Mammary epithelial cell (primary cell): ENCODE measurements at regions of chr6 and their contacts with region 1.

Region 1: DNA sequence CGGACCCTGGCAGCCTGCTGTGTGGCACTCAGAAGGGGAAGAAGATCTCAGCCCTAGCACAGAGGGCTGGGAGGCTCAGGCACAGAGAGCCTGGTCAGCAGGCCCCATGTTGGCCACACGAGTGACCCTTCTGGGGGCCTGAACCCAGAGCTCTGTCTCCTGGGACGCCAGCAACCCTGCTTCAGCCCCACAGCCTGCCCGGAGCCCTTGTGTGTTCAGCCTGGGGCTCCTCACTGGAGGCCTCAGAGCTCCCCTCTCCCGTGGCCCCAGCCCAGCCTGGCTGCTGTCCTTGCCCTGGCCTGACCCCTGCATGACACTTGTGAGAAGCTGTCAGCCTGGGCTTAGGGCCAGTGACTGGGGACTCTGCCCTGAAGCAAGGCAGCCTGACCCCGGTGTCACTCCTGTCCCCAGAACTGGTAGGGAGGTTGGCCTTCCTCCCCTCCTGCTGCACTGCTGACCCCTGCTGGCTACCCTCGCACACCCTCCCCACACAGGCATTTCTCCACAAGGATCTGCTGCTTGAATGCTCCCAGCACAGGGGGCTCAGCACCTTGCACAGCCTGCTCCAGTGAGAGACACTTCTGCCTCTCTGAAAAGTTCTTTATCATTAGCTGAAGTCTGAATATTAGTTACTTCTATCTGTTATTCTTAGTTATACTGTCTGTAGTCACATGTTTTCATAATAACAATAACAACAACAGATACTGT is 15.4 kb upstream of the IP6K3 start:
- DNase-seq: peak; percentile 30
- H3K4me3 ChIP-seq: no peak overlapping the region
- H3K27ac ChIP-seq: no peak overlapping the region
- H3K4me1 ChIP-seq: no peaks in the 10 kb centered on the region
- H3K27me3 ChIP-seq: no peaks in the 10 kb centered on the region
- CTCF ChIP-seq: peak; percentile 68 to 91

Region 2: DNA sequence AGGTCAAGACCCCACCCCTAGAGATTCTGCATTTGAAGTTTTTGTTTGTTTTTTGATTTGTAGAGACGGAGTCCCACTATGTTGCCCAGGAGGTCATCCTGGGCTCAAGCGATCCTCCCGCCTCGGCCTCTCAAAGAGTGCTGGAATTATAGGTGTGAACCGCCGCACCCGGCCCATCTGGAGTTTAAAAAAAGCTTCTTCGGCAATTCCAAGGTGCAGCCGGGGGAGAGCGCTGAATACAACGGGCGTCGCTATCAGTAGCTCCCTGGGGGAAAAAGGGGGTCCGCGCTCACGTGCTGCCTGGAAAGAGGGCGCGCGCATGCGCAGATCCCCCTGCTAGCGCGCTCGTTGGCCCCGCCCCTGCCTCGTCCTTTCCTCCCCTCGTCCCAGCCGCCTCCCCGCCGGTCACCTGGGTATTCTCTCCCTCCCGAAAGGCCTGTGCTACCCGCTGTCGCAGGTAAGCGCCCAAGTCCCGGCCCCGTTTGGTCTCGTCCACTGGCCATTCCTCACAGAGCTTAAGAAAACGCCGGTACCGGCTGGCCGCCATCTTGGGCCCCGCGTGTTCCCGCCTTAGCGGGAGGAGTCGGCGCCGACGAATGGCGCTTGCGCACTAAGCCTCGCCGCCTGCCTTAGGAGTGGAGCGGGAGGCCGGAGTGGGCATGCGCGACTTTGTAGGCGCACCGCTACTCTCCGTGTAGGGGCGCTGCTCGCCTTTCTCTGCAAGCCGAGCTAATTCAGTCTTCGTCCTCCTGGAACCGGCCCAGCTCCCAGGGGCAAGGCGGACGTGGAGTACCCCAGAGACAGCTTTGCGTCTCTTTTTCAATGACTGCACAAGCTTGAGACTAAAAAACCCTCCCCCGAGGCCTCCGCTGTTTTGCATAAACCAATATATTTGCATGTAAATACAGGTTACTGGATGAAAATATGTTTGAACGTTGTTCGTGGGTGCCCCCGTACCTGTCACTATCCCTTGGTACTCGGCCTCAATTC is 50.6 kb before region 1 on chr6 and contains the start of gene UQCC2:
- CTCF ChIA-PET with region 1: interaction called, 25 read pairs
- dilution Hi-C with region 1: loop called (anchors 10 kb)
- in situ Hi-C with region 1: loop called (anchors 5 to 10 kb)
- intact Hi-C with region 1: loop called (anchors 1 kb)
- DNase-seq: peak; percentile 93
- H3K4me3 ChIP-seq: peak within 1 kb of the TSS; percentile 81 to 97 (median 84)
- H3K27ac ChIP-seq: peak within 1 kb of the TSS; percentile 91
- H3K4me1 ChIP-seq: peaks cover 23% of the 10 kb centered on the region
- H3K27me3 ChIP-seq: no peaks in the 10 kb centered on the region
- CTCF ChIP-seq: peak; percentile 63 to 88
- total RNA-seq, gene UQCC2: 12.3 to 65.2 TPM

Region 3: GRCh38 chr6:33744001-33744848 is 17.9 kb before region 1 on chr6:
- CTCF ChIA-PET with region 1: interaction called, 11 read pairs
- dilution Hi-C with region 1: no loop called
- in situ Hi-C with region 1: no loop called
- intact Hi-C with region 1: loop called (anchors 1 kb)
- DNase-seq: peak; percentile 96
- H3K4me3 ChIP-seq: no peak overlapping the region
- H3K27ac ChIP-seq: no peak overlapping the region
- H3K4me1 ChIP-seq: peaks cover 35% of the 10 kb centered on the region
- H3K27me3 ChIP-seq: no peaks in the 10 kb centered on the region
- CTCF ChIP-seq: peak; percentile 96 to 97

Region 4: GRCh38 chr6:33840048-33840926 is 78.2 kb after region 1 on chr6:
- CTCF ChIA-PET with region 1: no interaction called
- dilution Hi-C with region 1: loop called (anchors 5 kb)
- in situ Hi-C with region 1: no loop called
- intact Hi-C with region 1: no loop called
- DNase-seq: peak; percentile 97
- H3K4me3 ChIP-seq: no peak overlapping the region
- H3K27ac ChIP-seq: peak overlapping the region; percentile 80
- H3K4me1 ChIP-seq: peaks cover 44% of the 10 kb centered on the region
- H3K27me3 ChIP-seq: no peaks in the 10 kb centered on the region
- CTCF ChIP-seq: no peak

Region 5: GRCh38 chr6:33851959-33852358 is 89.9 kb after region 1 on chr6:
- CTCF ChIA-PET with region 1: no interaction called
- dilution Hi-C with region 1: no loop called
- in situ Hi-C with region 1: no loop called
- intact Hi-C with region 1: no loop called
- DNase-seq: no peak
- H3K4me3 ChIP-seq: no peak overlapping the region
- H3K27ac ChIP-seq: no peak overlapping the region
- H3K4me1 ChIP-seq: peaks cover 4% of the 10 kb centered on the region
- H3K27me3 ChIP-seq: no peaks in the 10 kb centered on the region
- CTCF ChIP-seq: peak; percentile 50 to 78

Region 6: GRCh38 chr6:33983105-33983716 is 221.1 kb after region 1 on chr6:
- CTCF ChIA-PET with region 1: no interaction called
- dilution Hi-C with region 1: no loop called
- in situ Hi-C with region 1: no loop called
- intact Hi-C with region 1: no loop called
- DNase-seq: no peak
- H3K4me3 ChIP-seq: no peak overlapping the region
- H3K27ac ChIP-seq: no peak overlapping the region
- H3K4me1 ChIP-seq: no peaks in the 10 kb centered on the region
- H3K27me3 ChIP-seq: no peaks in the 10 kb centered on the region
- CTCF ChIP-seq: no peak

Region 7: GRCh38 chr6:34005901-34006531 is 243.9 kb after region 1 on chr6:
- CTCF ChIA-PET with region 1: no interaction called
- dilution Hi-C with region 1: loop called (anchors 5 kb)
- in situ Hi-C with region 1: no loop called
- intact Hi-C with region 1: no loop called
- DNase-seq: no peak
- H3K4me3 ChIP-seq: no peak overlapping the region
- H3K27ac ChIP-seq: no peak overlapping the region
- H3K4me1 ChIP-seq: no peaks in the 10 kb centered on the region
- H3K27me3 ChIP-seq: no peaks in the 10 kb centered on the region
- CTCF ChIP-seq: no peak